ENCODE measurements at regions of chr20 and their contacts with region 1.

Region 1: GRCh38 chr20:44866703-44867335 is 18.7 kb upstream of the YWHAB start:
- DNase-seq: no peak
- H3K4me3 Mint-ChIP-seq: peak overlapping the region; percentile 35
- H3K27ac Mint-ChIP-seq: no peak overlapping the region
- H3K4me1 Mint-ChIP-seq: peaks cover 14% of the 10 kb centered on the region
- H3K27me3 Mint-ChIP-seq: peaks cover 16% of the 10 kb centered on the region

Region 2: DNA sequence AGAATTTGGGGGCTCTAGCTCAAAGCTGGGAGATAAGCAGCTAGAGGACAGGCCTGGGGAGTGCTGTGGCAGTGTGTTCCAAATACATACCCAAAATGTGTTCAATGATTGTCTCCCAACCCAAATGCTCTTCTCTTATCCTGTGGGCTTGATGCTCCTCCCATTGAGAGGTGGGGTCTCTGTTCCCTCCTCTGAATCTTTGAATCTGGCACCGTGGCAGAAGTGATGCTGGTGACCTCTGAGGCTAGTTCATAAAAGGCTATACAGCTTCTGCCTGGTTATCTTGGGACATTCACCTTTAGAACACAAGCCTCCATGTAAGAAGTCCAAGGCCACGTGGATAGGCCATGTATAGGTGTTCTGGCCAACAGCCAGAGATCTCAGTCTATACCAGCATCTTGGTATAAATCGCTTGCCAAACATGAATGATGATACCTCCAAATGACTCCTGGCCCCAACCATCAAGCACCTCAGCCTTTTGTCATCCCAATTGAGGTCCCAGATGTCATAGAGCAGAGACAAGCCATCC is 1215.8 kb before region 1 on chr20:
- intact Hi-C with region 1: no loop called
- DNase-seq: no peak
- H3K4me3 Mint-ChIP-seq: no peak overlapping the region
- H3K27ac Mint-ChIP-seq: no peak overlapping the region
- H3K4me1 Mint-ChIP-seq: no peaks in the 10 kb centered on the region
- H3K27me3 Mint-ChIP-seq: no peaks in the 10 kb centered on the region

Region 3: DNA sequence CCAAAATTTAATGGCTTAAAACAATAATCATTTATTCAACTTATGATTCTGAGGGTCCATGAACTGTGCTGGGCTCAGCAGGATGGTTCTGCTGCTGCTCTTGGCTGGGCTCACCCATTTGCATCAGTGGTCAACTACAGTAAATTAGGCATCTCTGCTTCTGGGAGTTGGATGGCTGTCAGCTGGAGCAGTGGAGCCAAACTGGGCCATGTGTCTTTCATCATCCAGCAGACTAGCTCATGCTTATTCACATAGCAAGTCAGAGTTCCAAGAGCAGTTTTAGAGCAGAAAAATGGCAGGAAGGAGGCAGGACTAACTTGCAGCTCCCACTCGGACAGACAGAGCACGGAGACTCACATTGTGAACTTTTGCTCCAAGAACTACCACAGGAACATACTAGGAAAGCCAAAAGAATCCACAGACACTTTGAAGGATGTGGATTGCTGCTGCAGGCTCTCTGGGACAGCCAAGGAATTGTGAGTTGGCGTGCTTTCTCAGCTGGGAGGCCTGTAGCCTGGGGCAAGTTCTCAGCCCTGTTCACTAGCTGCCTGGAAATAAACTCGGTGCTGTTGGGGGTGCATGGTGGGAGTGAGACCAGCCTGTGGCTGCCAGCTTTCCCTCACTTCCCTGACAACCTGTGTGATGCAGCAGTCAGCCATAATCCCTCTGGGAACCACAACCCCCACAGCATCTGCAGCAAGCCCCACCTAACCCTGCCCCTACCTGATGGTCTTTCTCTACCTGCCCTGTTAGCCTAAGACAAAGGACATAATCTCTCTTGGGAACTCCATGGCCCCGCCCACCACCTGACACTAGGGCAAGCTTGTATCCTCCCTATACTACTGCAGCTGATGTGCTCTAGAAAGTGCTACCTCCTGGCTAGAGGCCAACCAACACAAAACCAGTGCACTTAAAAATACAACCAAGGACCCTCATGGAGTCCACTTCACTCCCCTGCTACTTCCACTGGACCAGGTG is 808.8 kb before region 1 on chr20:
- intact Hi-C with region 1: no loop called
- DNase-seq: no peak
- H3K4me3 Mint-ChIP-seq: no peak overlapping the region
- H3K27ac Mint-ChIP-seq: no peak overlapping the region
- H3K4me1 Mint-ChIP-seq: peaks cover 28% of the 10 kb centered on the region
- H3K27me3 Mint-ChIP-seq: peaks cover 7% of the 10 kb centered on the region

Region 4: DNA sequence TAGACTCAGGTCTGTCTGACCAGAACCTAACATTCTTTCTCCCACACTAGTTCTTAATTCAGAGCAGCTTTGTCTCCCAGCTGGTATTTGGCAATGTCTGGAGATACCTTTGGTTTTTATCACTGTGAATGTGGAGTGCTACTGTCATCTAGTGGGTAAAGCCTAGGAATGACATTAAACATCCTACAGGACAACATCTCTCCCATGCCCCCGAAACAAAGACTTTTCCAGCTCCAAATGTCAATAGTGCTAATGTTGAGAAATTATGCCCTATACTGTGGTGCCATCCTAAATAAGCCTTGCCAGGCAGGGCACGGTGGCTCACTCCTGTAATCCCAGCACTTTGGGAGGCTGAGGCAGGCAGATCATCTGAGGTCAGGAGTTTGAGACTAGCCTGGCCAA is 395.3 kb before region 1 on chr20:
- intact Hi-C with region 1: no loop called
- DNase-seq: no peak
- H3K4me3 Mint-ChIP-seq: no peak overlapping the region
- H3K27ac Mint-ChIP-seq: no peak overlapping the region
- H3K4me1 Mint-ChIP-seq: peaks cover 11% of the 10 kb centered on the region
- H3K27me3 Mint-ChIP-seq: peaks cover 3% of the 10 kb centered on the region

Region 5: DNA sequence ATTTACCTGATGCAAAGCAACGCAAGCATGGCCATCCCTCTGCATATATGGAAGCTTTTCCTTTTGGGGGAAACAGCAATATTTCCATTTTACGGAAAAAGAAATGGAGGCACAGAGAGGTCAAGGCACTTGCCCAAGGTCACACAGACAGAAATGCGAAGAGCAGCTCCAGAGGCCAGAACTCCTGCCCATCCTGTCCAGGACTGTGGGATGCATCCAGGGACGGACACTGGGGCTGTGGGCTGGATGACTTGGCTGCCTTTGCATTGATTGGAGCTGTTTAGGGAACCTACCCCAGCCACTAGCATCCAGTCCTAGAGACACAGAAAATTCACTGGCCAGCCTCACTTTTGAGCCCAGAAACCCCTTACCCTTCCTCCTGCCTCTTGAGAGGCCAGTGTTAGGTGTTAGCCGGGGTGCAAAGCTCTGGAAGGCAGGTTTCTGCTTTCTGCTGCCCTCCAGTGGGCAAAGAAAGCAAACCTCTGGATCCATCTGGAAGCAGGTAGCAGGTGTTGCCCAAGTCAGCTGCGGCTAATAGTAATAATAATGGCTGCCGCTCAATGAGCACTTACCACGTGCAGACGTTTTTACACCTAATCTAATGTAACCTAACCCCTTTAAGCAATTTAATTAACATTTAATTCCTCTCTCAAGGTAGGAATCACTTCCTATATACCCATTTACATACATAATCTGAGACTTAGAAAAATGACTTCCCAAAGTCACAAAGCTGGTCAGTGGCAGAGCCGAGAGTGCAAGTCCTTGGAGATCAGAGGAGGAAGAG is 183.4 kb before region 1 on chr20:
- intact Hi-C with region 1: loop called (anchors 1 kb)
- DNase-seq: peak; percentile 25
- H3K4me3 Mint-ChIP-seq: no peak overlapping the region
- H3K27ac Mint-ChIP-seq: no peak overlapping the region
- H3K4me1 Mint-ChIP-seq: peaks cover 17% of the 10 kb centered on the region
- H3K27me3 Mint-ChIP-seq: no peaks in the 10 kb centered on the region

Region 6: GRCh38 chr20:44747166-44748004 is 119.4 kb before region 1 on chr20:
- intact Hi-C with region 1: loop called (anchors 1 kb)
- DNase-seq: peak; percentile 34
- H3K4me3 Mint-ChIP-seq: peak overlapping the region; percentile 71
- H3K27ac Mint-ChIP-seq: peak overlapping the region; percentile 72
- H3K4me1 Mint-ChIP-seq: peaks cover 18% of the 10 kb centered on the region
- H3K27me3 Mint-ChIP-seq: peaks cover 26% of the 10 kb centered on the region

Region 7: DNA sequence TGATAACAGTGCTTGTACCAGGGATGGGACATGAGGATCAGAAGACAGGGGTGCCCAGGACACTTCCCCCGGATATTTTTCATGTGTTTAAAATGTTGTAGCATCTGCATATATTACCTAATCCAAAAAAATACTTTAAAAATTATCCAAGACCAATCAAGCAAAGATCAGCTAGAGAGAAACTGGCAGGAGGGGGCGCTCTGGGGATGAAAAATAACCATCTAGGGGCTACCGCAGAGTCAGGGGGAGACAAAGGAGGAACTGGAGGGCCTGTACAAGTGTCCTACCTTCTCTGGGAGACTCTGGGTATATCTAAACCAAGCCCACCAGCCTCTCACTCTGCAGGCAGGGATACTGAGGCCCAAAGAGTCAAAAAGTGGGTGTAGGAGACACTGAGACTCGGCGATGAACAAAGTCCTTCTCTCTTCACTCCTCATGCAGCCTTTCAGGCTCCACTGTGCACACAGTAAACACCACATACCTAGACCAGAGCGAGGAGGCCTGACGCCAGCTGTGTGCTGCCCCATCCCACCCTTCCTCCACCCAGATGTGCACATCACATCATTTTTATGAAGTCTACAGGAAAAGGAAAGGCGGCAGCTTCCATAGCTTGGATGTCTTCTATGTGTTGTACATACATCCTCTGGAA is 66.3 kb before region 1 on chr20:
- intact Hi-C with region 1: loop called (anchors 5 kb)
- DNase-seq: no peak
- H3K4me3 Mint-ChIP-seq: no peak overlapping the region
- H3K27ac Mint-ChIP-seq: no peak overlapping the region
- H3K4me1 Mint-ChIP-seq: no peaks in the 10 kb centered on the region
- H3K27me3 Mint-ChIP-seq: peaks cover 19% of the 10 kb centered on the region

Region 8: GRCh38 chr20:44849703-44850102 is 17.1 kb before region 1 on chr20:
- intact Hi-C with region 1: no loop called
- DNase-seq: no peak
- H3K4me3 Mint-ChIP-seq: no peak overlapping the region
- H3K27ac Mint-ChIP-seq: no peak overlapping the region
- H3K4me1 Mint-ChIP-seq: no peaks in the 10 kb centered on the region
- H3K27me3 Mint-ChIP-seq: peaks cover 17% of the 10 kb centered on the region